ENCODE measurements at regions of chr2 and their contacts with region 1.

Region 1: GRCh38 chr2:172084734-172085459 is 410 bp upstream of the DLX1 start:
- DNase-seq: peak; percentile 78
- ATAC-seq: peak; percentile 78
- H3K4me3 Mint-ChIP-seq: peak overlapping the region; percentile 73
- H3K27ac Mint-ChIP-seq: no peak overlapping the region
- H3K4me1 Mint-ChIP-seq: peaks cover 55% of the 10 kb centered on the region
- H3K27me3 Mint-ChIP-seq: peaks cover 82% of the 10 kb centered on the region

Region 2: DNA sequence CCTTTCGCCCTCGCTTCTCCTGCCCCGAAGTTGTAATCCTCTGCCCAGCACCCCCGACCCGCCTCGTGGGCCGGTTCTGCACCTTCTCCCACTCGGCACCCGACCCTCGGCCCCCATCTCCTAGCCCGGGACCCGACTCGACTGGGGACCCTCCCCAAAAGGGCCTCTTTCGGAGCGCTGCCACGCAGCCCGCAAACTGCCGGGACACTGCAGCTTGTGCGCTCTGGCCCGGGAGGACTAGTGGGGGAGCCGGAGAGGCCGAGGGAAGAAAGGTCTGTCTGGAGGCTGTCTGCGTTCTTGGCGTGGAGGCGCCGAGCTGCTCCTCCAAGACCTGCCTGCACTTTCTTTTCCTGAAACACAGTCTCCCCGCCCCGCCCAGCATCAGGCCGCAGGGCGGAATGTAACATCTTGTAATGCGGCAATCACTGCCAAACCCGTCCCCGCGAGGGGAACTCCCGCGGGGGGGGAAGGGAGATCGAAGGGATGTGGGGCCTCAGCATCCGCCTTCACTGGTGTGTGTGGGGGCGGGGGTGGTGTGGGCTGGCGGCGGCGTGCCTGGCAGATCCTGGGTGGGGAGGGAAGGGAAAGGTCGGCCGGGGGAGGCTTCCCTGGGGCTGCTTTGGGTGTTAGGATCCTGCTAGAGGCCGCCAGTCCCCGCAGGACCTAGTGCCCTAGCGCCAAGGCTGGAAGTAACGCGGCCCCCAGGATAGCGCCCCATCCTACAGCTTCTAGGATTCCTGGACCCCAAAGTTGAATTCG is 10.4 kb after region 1 on chr2:
- CTCF ChIA-PET with region 1: interaction called, 93 read pairs
- POLR2A ChIA-PET with region 1: interaction called, 3 read pairs
- intact Hi-C with region 1: loop called (anchors 1 kb)
- DNase-seq: peak; percentile 82
- ATAC-seq: peak; percentile 56
- H3K4me3 Mint-ChIP-seq: peak overlapping the region; percentile 69
- H3K27ac Mint-ChIP-seq: no peak overlapping the region
- H3K4me1 Mint-ChIP-seq: peaks cover 42% of the 10 kb centered on the region
- H3K27me3 Mint-ChIP-seq: peaks cover 64% of the 10 kb centered on the region

Measured in activated CD4-positive, alpha-beta T cell treated with anti-CD3 and anti-CD28 coated beads for 36 hours (primary cell).